ENCODE measurements at regions of chr9 and their contacts with region 1.

Region 1: DNA sequence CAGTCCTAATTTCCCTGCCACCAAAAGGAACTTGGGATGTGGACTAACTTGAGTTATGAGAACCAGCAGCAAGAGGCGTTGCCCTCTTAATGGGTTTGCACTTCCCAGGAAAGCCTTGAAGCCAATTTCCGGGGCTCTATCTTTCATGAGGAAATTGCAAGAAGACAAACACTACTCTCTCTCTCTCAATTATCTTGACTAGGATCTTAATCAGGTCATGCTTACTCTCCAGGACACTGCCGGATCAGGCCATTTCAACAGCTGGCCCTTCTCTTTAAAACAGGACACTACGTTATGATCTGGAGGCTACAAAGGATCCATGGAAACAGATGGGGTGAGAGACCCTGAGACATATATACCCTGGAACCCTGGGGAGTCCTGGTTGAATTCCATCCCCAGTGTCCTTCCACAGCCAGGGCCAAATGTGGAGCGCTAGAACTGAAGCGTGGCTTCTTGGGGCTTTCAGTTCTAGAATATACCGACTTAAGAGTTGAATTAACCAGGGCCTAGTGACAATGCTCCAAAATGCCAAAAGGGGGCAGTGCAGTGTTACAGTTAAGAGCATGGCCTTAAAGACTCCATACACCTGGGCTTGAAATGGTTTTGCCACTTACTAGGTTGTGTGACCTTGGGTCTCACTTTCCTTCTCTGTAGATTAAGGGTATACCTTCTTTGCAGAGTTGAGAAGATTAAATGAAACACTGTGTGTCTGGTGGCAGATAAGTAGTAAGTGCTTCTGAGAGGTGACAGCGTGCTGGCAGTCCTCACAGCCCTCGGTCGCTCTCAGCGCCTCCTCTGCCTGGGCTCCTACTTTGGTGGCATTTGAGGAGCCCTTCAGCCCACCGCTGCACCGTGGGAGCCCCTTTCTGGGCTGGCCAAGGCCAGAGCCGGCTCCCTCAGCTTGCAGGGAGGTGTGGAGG is 21.1 kb downstream of the FAM219A start:
- DNase-seq: peak; percentile 83
- H3K4me3 ChIP-seq: no peak overlapping the region
- H3K27ac ChIP-seq: no peak overlapping the region
- H3K4me1 ChIP-seq: peaks cover 18% of the 10 kb centered on the region
- H3K27me3 ChIP-seq: no peaks in the 10 kb centered on the region
- CTCF ChIP-seq: peak; percentile 75 to 77
- POLR2A ChIP-seq: no peak

Region 2: GRCh38 chr9:34451545-34451944 is 14.3 kb after region 1 on chr9:
- CTCF ChIA-PET with region 1: interaction called, 30 read pairs
- POLR2A ChIA-PET with region 1: no interaction called
- dilution Hi-C with region 1: no loop called
- intact Hi-C with region 1: loop called (anchors 1 kb)
- DNase-seq: no peak
- H3K4me3 ChIP-seq: no peak overlapping the region
- H3K27ac ChIP-seq: no peak overlapping the region
- H3K4me1 ChIP-seq: peaks cover 20% of the 10 kb centered on the region
- H3K27me3 ChIP-seq: no peaks in the 10 kb centered on the region
- CTCF ChIP-seq: no peak
- POLR2A ChIP-seq: no peak

Region 3: GRCh38 chr9:34493972-34494535 is 56.8 kb after region 1 on chr9:
- CTCF ChIA-PET with region 1: interaction called, 13 read pairs
- POLR2A ChIA-PET with region 1: no interaction called
- dilution Hi-C with region 1: no loop called
- intact Hi-C with region 1: loop called (anchors 1 kb)
- DNase-seq: peak; percentile 49
- H3K4me3 ChIP-seq: no peak overlapping the region
- H3K27ac ChIP-seq: no peak overlapping the region
- H3K4me1 ChIP-seq: peaks cover 14% of the 10 kb centered on the region
- H3K27me3 ChIP-seq: peaks cover 6 to 8% of the 10 kb centered on the region in 2 experiments
- CTCF ChIP-seq: no peak
- POLR2A ChIP-seq: no peak

Measured in endothelial cell of umbilical vein (primary cell).